Mucosa of descending colon (tissue), 3 donors: ENCODE measurements at regions of chr9 and their contacts with region 1.

Region 1: GRCh38 chr9:131481441-131482342 is 21.0 kb upstream of the POMT1 start:
- DNase-seq: peak in 1 of 3 donors; percentile 7
- ATAC-seq: no peak
- H3K4me3 ChIP-seq: no peak overlapping the region
- H3K4me1 ChIP-seq: no peaks in the 10 kb centered on the region
- CTCF ChIP-seq: no peak

Region 2: DNA sequence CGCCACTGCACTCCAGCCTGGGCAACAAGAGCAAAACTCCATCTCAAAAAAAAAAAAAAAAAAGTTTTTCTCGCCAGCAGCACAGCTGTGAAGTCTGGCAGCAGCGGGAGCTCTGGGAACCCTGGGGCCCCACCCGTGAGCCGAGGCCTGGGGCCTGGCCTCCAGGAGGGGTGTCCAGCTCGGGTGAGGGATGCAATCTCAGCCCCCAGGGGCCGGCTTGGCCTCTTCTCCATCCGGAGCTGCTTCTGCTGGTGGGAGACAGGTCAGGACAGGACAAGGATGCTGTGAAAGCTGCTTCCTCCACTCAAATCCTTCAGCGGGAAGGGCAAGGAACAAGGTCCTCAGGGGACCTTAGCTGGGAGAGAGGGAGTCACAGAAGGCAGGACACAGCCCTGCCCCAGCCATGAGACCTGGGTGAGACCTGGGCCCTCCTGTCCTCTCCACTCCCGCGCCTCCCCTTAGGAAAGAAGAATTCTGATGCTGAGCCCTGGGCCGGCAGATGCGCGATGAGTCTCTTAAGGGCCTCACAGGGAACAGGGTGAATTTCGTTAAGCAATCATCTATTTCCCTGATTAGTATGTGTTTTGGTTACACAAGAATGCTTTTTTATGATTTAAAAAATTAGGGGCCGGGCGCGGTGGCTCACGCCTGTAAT is 161.5 kb before region 1 on chr9:
- intact Hi-C with region 1: no loop called
- DNase-seq: peak in 1 of 3 donors; percentile 57
- ATAC-seq: peak; percentile 13
- H3K4me3 ChIP-seq: no peak overlapping the region
- H3K4me1 ChIP-seq: no peaks in the 10 kb centered on the region
- CTCF ChIP-seq: no peak

Region 3: GRCh38 chr9:131349881-131350563 is 131.7 kb before region 1 on chr9:
- intact Hi-C with region 1: loop called in 1 of 2 experiments (anchors 10 kb)
- DNase-seq: peak; percentile 89 to 95 (median 90)
- ATAC-seq: peak; percentile 98
- H3K4me3 ChIP-seq: no peak overlapping the region
- H3K4me1 ChIP-seq: peaks cover 5% of the 10 kb centered on the region
- CTCF ChIP-seq: peak; percentile 54